Spleen (tissue), 13 donors: ENCODE measurements at regions of chr17 and their contacts with region 1.

Region 1: DNA sequence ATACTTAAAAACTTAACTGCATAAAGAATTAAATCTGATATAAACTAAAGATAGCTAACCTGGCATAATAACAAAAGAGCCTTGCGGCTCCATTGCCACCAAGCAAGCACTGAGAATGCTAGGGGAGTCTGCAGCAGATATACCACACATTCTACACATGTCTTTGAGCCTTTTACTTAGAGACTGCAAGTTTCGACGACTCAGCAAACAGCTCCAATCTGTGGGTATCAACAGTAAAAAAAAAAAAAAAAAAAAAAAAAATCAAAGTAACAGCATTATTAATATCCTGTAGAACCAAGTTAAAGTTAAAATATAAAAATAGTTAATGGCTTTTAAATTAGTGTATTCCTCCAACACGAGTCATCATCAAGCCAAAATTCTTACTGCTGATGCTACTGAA is 27.8 kb upstream of the INTS2 start:
- DNase-seq: no peak
- H3K4me3 ChIP-seq: no peak overlapping the region
- H3K27ac ChIP-seq: no peak overlapping the region
- H3K4me1 ChIP-seq: no peaks in the 10 kb centered on the region
- H3K27me3 ChIP-seq: no peaks in the 10 kb centered on the region
- CTCF ChIP-seq: no peak
- POLR2A ChIP-seq: no peak

Region 2: GRCh38 chr17:62008294-62008693 is 52.7 kb after region 1 on chr17:
- intact Hi-C with region 1: loop called (anchors 10 kb)
- DNase-seq: no peak
- H3K4me3 ChIP-seq: no peak overlapping the region
- H3K27ac ChIP-seq: no peak overlapping the region
- H3K4me1 ChIP-seq: peaks cover 0 to 32% (median 0%) of the 10 kb centered on the region in 6 donors
- H3K27me3 ChIP-seq: no peaks in the 10 kb centered on the region
- CTCF ChIP-seq: no peak
- POLR2A ChIP-seq: no peak